ENCODE measurements at regions of chr19 and their contacts with region 1.

Region 1: DNA sequence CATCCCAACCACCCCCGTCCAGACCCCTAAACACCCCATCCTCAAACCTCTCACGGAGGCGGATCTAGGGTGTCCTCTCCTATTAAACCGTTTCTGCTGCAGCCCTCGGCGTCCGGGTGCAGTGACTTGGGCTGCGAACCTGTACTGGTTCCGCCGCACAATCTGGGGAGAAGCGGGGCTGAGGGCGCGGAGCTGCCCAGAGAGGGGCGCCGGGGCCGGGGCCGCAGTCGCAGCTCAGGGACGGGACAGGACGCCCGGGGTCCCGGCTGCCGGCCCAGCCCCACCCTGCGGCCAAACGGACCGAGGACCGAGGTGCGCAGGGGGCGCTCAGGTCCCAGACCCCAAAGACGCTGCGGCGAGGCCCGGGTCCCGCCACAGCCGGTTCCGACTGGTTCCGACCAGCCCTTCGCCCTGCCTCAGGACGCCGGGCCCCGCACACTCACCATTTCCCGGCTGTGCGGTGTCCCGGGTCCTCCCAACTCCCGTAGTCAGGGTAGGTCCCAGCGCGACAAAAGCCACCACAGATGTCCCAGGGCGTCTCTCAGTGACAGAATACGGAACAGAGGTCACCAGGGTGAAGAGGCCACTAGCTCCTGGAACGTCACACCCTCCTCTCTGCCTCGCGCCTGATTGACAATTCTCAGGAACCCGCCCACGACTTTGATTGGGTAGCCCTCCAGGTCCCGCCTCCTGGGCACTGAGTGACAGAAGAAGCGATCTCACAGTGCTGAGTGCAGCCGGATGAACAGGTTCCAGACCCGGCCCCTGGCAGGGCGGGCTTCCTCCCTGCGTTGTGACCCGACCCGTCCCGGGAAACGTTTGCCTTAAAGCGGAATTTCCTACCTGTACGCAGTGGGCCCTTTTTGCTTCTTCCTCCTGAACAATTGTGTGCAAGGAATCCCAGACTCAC is at the start of gene ZNF44:
- DNase-seq: peak; percentile 97 to 99
- ATAC-seq: peak; percentile 99 to 100 (median 99)
- H3K4me3 ChIP-seq: peak within 1 kb of the TSS; percentile 75 to 100 (median 94)
- H3K27ac ChIP-seq: peak within 1 kb of the TSS; percentile 95 to 99 (median 97)
- H3K4me1 ChIP-seq: peaks cover 0 to 47% (median 33%) of the 10 kb centered on the region in 9 donors
- H3K27me3 ChIP-seq: no peaks in the 10 kb centered on the region
- CTCF ChIP-seq: no peak
- total RNA-seq, gene ZNF44: 7.5 to 12.7 (median 10.4) TPM

Region 2: GRCh38 chr19:12265921-12266704 is 28.4 kb before region 1 on chr19:
- intact Hi-C with region 1: no loop called
- DNase-seq: no peak
- ATAC-seq: peak in 2 of 8 donors; percentile 31 to 59
- H3K4me3 ChIP-seq: no peak overlapping the region
- H3K27ac ChIP-seq: no peak overlapping the region
- H3K4me1 ChIP-seq: no peaks in the 10 kb centered on the region
- H3K27me3 ChIP-seq: no peaks in the 10 kb centered on the region
- CTCF ChIP-seq: no peak

Region 3: GRCh38 chr19:12333162-12334159 is 39.0 kb after region 1 on chr19 and contains the start of gene ZNF563:
- intact Hi-C with region 1: loop called in 6 of 10 experiments (anchors 2 to 5 kb)
- DNase-seq: peak; percentile 97 to 98
- ATAC-seq: peak; percentile 99 to 100 (median 99)
- H3K4me3 ChIP-seq: peak within 1 kb of the TSS; percentile 77 to 98 (median 87)
- H3K27ac ChIP-seq: peak within 1 kb of the TSS; percentile 74 to 98 (median 92)
- H3K4me1 ChIP-seq: peaks cover 0 to 29% (median 18%) of the 10 kb centered on the region in 9 donors
- H3K27me3 ChIP-seq: no peaks in the 10 kb centered on the region
- CTCF ChIP-seq: peak in 1 of 9 donors; percentile 5
- total RNA-seq, gene ZNF563: 2.1 to 6.2 (median 4.5) TPM

Measured in heart right ventricle (tissue), 16 donors.